T-cell (primary cell): ENCODE measurements at regions of chr6 and their contacts with region 1.

Region 1: DNA sequence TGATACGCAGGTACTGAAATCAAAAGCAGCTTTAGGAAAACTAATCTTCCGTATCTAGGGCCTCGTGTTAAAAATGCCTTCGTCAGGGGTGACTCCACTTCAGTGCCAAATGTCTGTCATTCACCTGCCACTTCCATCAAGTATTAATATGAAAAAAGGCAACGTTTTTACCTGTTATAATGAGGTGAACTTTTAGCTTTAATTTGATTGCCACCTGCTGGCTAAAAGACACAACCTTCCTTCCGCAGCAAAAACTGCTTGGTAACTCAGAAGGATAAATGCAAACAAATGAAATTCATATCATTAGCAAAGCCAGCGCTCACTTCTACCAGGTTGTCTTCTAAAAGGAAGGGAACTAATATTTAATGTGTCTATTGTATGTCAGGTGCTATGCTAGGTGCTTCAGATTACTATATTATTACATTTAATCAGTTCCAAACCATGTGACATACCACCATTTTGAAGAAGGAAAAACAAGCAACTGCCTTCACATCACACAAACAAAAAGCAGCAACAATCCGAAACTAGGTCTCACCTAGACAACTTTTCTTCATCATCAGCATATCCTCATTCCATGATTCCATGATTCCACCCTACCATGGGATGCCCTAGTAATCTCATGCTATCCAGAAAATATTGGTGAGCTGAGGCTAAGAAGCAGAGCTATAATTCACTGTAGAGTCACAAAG is 20.6 kb upstream of the ARHGAP18 start:
- DNase-seq: peak in 14 of 35 experiments; percentile 3 to 70 (median 16)
- ATAC-seq: peak in 3 of 4 experiments; percentile 60 to 64 (median 60)
- H3K4me3 ChIP-seq: no peak overlapping the region
- H3K4me3 Mint-ChIP-seq: no peak overlapping the region
- H3K27ac ChIP-seq: no peak overlapping the region
- H3K27ac Mint-ChIP-seq: peak overlapping the region in 1 of 2 donors; percentile 25
- H3K4me1 ChIP-seq: peaks cover 0 to 2% of the 10 kb centered on the region in 2 experiments
- H3K4me1 Mint-ChIP-seq: peaks cover 5 to 16% (median 13%) of the 10 kb centered on the region in 3 donors
- H3K27me3 ChIP-seq: no peaks in the 10 kb centered on the region
- H3K27me3 Mint-ChIP-seq: no peaks in the 10 kb centered on the region

Region 2: DNA sequence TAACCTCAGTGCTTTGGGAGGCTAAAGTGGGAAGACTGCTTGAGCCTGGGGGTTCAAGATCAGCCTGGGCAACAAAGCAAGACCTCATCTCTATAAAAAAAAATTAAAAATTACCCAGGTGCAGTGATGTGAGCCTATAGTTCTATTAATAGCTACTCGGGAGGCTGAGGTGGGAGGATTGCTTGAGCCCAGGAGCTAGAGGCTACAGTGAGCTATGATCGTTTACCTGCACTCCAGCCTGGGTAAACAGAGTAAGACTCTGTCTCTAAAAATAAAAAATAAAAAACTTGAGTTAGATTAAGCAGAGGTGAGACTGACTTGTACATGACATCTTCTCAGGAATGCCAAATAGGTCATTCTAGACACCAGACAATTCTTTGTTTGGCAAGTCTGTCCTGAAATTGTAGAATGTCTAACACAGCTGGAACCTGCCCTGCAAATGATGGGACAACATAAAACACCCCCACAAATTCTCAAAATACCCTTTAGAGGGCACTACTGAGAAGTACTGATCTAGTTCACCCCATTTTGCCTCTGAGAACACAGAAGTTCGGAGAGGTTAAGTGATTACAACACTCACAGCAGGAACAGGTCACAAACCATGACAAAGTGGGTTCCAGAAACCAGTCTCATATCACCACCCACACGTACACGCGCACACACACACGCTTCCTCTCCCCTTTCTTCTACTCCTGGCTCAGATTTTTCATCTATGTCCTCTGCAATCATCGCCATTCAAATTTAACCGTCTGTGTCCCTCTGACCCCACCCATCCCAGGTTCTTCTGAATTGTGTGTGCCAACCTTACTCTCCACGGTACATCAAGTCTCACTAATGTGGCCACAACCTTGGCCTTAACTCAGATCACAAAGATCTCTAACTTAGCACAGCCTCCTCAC is 58.9 kb before region 1 on chr6:
- CTCF ChIA-PET with region 1: interaction called, 5 to 13 read pairs
- POLR2A ChIA-PET with region 1: no interaction called
- DNase-seq: peak in 34 of 35 experiments; percentile 9 to 77 (median 34)
- ATAC-seq: peak; percentile 78 to 87 (median 80)
- H3K4me3 ChIP-seq: peak overlapping the region in 1 of 2 donors; percentile 23
- H3K4me3 Mint-ChIP-seq: peak overlapping the region; percentile 60 to 80 (median 74)
- H3K27ac ChIP-seq: peak overlapping the region; percentile 72
- H3K27ac Mint-ChIP-seq: peak overlapping the region; percentile 89 to 91
- H3K4me1 ChIP-seq: peaks cover 12 to 17% of the 10 kb centered on the region in 2 experiments
- H3K4me1 Mint-ChIP-seq: peaks cover 25 to 29% (median 25%) of the 10 kb centered on the region in 3 donors
- H3K27me3 ChIP-seq: no peaks in the 10 kb centered on the region
- H3K27me3 Mint-ChIP-seq: no peaks in the 10 kb centered on the region

Region 3: GRCh38 chr6:129748212-129748900 is 17.7 kb after region 1 on chr6:
- CTCF ChIA-PET with region 1: interaction called, 4 to 11 read pairs
- POLR2A ChIA-PET with region 1: interaction called in 1 of 2 experiments, 4 read pairs
- DNase-seq: peak in 31 of 35 experiments; percentile 4 to 78 (median 28)
- ATAC-seq: peak; percentile 81 to 84 (median 82)
- H3K4me3 ChIP-seq: peak overlapping the region in 1 of 2 donors; percentile 21
- H3K4me3 Mint-ChIP-seq: peak overlapping the region; percentile 54 to 77 (median 72)
- H3K27ac ChIP-seq: peak overlapping the region; percentile 84
- H3K27ac Mint-ChIP-seq: peak overlapping the region; percentile 92 to 95
- H3K4me1 ChIP-seq: peaks cover 24 to 34% of the 10 kb centered on the region in 2 experiments
- H3K4me1 Mint-ChIP-seq: peaks cover 56 to 70% (median 59%) of the 10 kb centered on the region in 3 donors
- H3K27me3 ChIP-seq: no peaks in the 10 kb centered on the region
- H3K27me3 Mint-ChIP-seq: no peaks in the 10 kb centered on the region

Region 4: DNA sequence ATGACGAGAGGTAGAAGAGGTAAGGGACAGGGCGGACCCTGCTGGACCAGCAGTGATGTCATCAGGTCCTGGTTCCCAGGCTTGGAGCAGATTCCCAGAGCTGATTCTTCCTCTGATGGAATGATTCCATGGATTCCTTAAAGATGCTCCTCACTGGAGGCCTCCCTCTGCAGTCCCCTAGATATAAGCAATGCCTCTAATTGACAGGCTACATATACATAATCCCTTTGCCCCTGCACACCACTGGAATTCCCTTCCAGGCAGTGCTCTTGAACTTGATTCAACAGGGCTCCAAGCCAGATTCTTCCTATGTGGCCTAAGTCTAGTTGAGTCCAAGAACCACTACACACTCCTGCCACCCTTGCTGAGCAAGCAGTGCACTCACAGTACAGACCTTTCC is 235.5 kb after region 1 on chr6:
- CTCF ChIA-PET with region 1: no interaction called
- POLR2A ChIA-PET with region 1: no interaction called
- DNase-seq: no peak
- ATAC-seq: no peak
- H3K4me3 ChIP-seq: no peak overlapping the region
- H3K4me3 Mint-ChIP-seq: no peak overlapping the region
- H3K27ac ChIP-seq: no peak overlapping the region
- H3K27ac Mint-ChIP-seq: no peak overlapping the region
- H3K4me1 ChIP-seq: no peaks in the 10 kb centered on the region
- H3K4me1 Mint-ChIP-seq: no peaks in the 10 kb centered on the region
- H3K27me3 ChIP-seq: no peaks in the 10 kb centered on the region
- H3K27me3 Mint-ChIP-seq: peaks cover 10 to 21% of the 10 kb centered on the region in 2 donors

Region 5: DNA sequence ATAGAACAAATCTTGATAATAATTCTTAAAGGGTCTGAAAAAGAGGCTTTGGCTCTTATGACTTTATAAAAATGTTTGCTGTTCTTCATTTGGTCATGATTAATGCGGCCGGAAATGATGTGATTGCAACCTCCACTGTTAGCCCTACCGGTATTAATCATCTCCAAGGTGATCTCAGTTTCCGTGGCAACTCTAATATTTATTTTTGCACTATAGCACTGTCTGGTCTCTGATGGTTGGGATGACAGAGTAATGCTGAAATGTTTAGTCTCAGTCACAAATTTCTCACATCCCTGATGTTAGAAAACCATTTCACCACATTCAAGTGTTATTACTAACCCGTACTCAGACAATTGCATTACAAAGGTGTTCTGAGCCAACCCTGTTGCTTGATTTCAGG is 722.6 kb after region 1 on chr6:
- CTCF ChIA-PET with region 1: no interaction called
- POLR2A ChIA-PET with region 1: no interaction called
- DNase-seq: peak in 2 of 35 experiments; percentile 3 to 54
- ATAC-seq: peak in 1 of 4 experiments; percentile 56
- H3K4me3 ChIP-seq: no peak overlapping the region
- H3K4me3 Mint-ChIP-seq: no peak overlapping the region
- H3K27ac ChIP-seq: no peak overlapping the region
- H3K27ac Mint-ChIP-seq: no peak overlapping the region
- H3K4me1 ChIP-seq: peaks cover 0 to 2% of the 10 kb centered on the region in 2 experiments
- H3K4me1 Mint-ChIP-seq: peaks cover 5 to 10% (median 8%) of the 10 kb centered on the region in 3 donors
- H3K27me3 ChIP-seq: no peaks in the 10 kb centered on the region
- H3K27me3 Mint-ChIP-seq: no peaks in the 10 kb centered on the region